ENCODE measurements at regions of chr9 and their contacts with region 1.

Region 1: DNA sequence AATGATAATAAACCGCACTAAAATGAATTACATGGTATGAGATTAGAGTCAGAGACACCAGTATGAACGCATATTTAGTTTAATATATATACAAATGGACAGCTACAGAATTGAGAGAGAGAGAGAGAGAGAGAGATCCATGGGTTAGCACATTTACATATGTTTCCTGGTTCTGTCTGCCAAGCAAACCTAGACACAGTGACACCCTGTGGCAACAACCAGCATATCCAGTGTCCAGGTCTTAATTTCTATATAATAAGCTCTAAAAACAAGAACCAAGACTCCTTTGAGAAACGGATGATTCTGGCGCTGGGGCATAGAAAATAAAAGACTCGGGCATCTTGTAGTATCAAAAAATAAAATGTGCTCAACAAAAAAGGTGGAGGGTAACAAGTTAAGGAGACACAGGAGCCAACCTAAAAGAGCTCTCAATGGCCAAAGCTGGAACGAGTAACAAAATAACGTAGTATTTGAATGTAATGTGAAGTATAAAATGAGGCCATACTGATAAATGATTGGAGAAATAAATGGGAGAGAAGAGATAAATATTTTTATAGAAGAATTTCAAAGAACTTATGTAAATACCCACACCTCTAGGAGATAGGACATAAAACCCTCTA is 84.5 kb downstream of the RFX3 start:
- DNase-seq: peak; percentile 80
- H3K4me3 ChIP-seq: no peak overlapping the region
- H3K27ac ChIP-seq: no peak overlapping the region
- H3K4me1 ChIP-seq: no peaks in the 10 kb centered on the region
- H3K27me3 ChIP-seq: no peaks in the 10 kb centered on the region
- CTCF ChIP-seq: peak; percentile 42 to 63
- POLR2A ChIP-seq: no peak

Region 2: GRCh38 chr9:3215658-3216057 is 225.6 kb before region 1 on chr9:
- CTCF ChIA-PET with region 1: interaction called, 11 read pairs
- POLR2A ChIA-PET with region 1: no interaction called
- dilution Hi-C with region 1: no loop called
- intact Hi-C with region 1: no loop called
- DNase-seq: no peak
- H3K4me3 ChIP-seq: no peak overlapping the region
- H3K27ac ChIP-seq: no peak overlapping the region
- H3K4me1 ChIP-seq: no peaks in the 10 kb centered on the region
- H3K27me3 ChIP-seq: peaks cover 0 to 4% of the 10 kb centered on the region in 2 experiments
- CTCF ChIP-seq: no peak
- POLR2A ChIP-seq: no peak

Region 3: GRCh38 chr9:3246241-3246640 is 195.1 kb before region 1 on chr9:
- CTCF ChIA-PET with region 1: interaction called, 566 read pairs
- POLR2A ChIA-PET with region 1: interaction called, 5 read pairs
- dilution Hi-C with region 1: no loop called
- intact Hi-C with region 1: no loop called
- DNase-seq: no peak
- H3K4me3 ChIP-seq: no peak overlapping the region
- H3K27ac ChIP-seq: no peak overlapping the region
- H3K4me1 ChIP-seq: no peaks in the 10 kb centered on the region
- H3K27me3 ChIP-seq: no peaks in the 10 kb centered on the region
- CTCF ChIP-seq: no peak
- POLR2A ChIP-seq: no peak

Region 4: DNA sequence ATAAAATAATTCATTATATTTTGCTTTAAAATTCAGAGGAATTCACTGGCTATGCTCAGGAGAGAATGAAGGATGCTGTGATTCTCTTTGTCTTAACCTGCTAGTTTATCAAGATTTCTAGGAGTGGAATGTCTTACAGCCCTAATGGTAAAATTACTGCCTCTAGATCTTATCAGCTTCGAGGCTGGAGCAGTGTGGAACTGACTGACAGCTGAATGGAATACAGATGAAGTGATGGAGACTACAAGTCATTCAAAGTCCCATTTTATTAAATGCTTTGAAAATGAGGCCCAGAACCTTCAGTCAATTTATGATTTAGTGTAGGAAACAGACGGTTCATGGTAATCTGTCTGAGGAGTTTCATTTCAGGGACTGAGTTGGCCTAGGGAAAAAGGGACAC is 117.6 kb before region 1 on chr9:
- CTCF ChIA-PET with region 1: interaction called, 11 read pairs
- POLR2A ChIA-PET with region 1: no interaction called
- dilution Hi-C with region 1: no loop called
- intact Hi-C with region 1: loop called (anchors 1 kb)
- DNase-seq: peak; percentile 38
- H3K4me3 ChIP-seq: no peak overlapping the region
- H3K27ac ChIP-seq: no peak overlapping the region
- H3K4me1 ChIP-seq: peaks cover 33% of the 10 kb centered on the region
- H3K27me3 ChIP-seq: no peaks in the 10 kb centered on the region
- CTCF ChIP-seq: no peak
- POLR2A ChIP-seq: no peak

Region 5: GRCh38 chr9:3413984-3414383 is 27.3 kb before region 1 on chr9:
- CTCF ChIA-PET with region 1: interaction called, 32 read pairs
- POLR2A ChIA-PET with region 1: no interaction called
- dilution Hi-C with region 1: no loop called
- intact Hi-C with region 1: no loop called
- DNase-seq: no peak
- H3K4me3 ChIP-seq: no peak overlapping the region
- H3K27ac ChIP-seq: no peak overlapping the region
- H3K4me1 ChIP-seq: no peaks in the 10 kb centered on the region
- H3K27me3 ChIP-seq: no peaks in the 10 kb centered on the region
- CTCF ChIP-seq: no peak
- POLR2A ChIP-seq: no peak

Region 6: DNA sequence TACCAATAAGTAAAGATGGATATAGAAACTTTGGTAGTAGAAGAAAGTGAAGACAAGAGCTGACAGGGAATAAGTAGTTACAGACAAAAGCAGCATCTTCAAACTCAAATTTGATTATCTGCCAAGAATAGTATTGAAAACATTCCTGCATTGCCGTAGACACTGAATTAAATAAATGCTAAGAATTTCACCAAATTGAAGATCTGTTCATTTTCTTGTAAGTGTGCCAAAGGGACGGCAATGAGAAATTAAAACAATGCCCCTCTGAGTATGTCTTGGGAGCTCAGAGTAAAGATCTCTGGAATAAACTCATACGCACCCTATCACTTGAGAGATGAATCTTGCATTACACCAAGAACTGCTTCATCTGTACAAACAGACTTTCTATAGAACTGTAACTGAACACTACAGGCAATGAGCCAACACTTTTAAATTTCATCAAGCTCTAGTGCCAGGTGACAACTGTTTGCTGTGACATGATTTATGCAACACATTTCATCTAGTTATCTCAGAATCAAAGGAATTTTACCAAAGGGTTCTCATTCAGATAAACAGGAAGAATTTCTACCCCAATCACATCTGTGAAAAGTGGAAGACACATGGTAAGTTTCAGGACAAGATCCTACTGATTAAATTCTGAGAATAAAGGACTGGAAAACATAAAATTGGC is 17.6 kb after region 1 on chr9:
- CTCF ChIA-PET with region 1: interaction called, 37 read pairs
- POLR2A ChIA-PET with region 1: no interaction called
- dilution Hi-C with region 1: no loop called
- intact Hi-C with region 1: no loop called
- DNase-seq: no peak
- H3K4me3 ChIP-seq: no peak overlapping the region
- H3K27ac ChIP-seq: no peak overlapping the region
- H3K4me1 ChIP-seq: no peaks in the 10 kb centered on the region
- H3K27me3 ChIP-seq: no peaks in the 10 kb centered on the region
- CTCF ChIP-seq: no peak
- POLR2A ChIP-seq: no peak